PC-9 (cell line): ENCODE measurements at regions of chr17 and their contacts with region 1.

Region 1: GRCh38 chr17:79065105-79065670 is 9.4 kb upstream of the ENGASE start:
- DNase-seq: no peak
- H3K4me3 ChIP-seq: no peak overlapping the region
- H3K27ac ChIP-seq: no peak overlapping the region
- H3K4me1 ChIP-seq: no peaks in the 10 kb centered on the region
- H3K27me3 ChIP-seq: no peaks in the 10 kb centered on the region
- CTCF ChIP-seq: peak; percentile 58

Region 2: GRCh38 chr17:77881545-77881944 is 1183.6 kb before region 1 on chr17:
- CTCF ChIA-PET with region 1: no interaction called
- POLR2A ChIA-PET with region 1: no interaction called
- intact Hi-C with region 1: no loop called
- DNase-seq: no peak
- H3K4me3 ChIP-seq: no peak overlapping the region
- H3K27ac ChIP-seq: no peak overlapping the region
- H3K4me1 ChIP-seq: no peaks in the 10 kb centered on the region
- H3K27me3 ChIP-seq: peaks cover 49% of the 10 kb centered on the region
- CTCF ChIP-seq: no peak

Region 3: GRCh38 chr17:78532922-78533640 is 532.1 kb before region 1 on chr17:
- CTCF ChIA-PET with region 1: no interaction called
- POLR2A ChIA-PET with region 1: no interaction called
- intact Hi-C with region 1: no loop called
- DNase-seq: peak; percentile 40 to 80
- H3K4me3 ChIP-seq: no peak overlapping the region
- H3K27ac ChIP-seq: peak overlapping the region; percentile 27; the same call in 1 of the 2 replicates
- H3K4me1 ChIP-seq: peaks cover 43% of the 10 kb centered on the region
- H3K27me3 ChIP-seq: no peaks in the 10 kb centered on the region
- CTCF ChIP-seq: no peak

Region 4: GRCh38 chr17:78999056-78999768 is 66.0 kb before region 1 on chr17:
- CTCF ChIA-PET with region 1: interaction called, 11 read pairs
- POLR2A ChIA-PET with region 1: no interaction called
- intact Hi-C with region 1: no loop called
- DNase-seq: no peak
- H3K4me3 ChIP-seq: no peak overlapping the region
- H3K27ac ChIP-seq: no peak overlapping the region
- H3K4me1 ChIP-seq: peaks cover 34% of the 10 kb centered on the region
- H3K27me3 ChIP-seq: no peaks in the 10 kb centered on the region
- CTCF ChIP-seq: no peak

Region 5: GRCh38 chr17:79126139-79126538 is 61.0 kb after region 1 on chr17:
- CTCF ChIA-PET with region 1: no interaction called
- POLR2A ChIA-PET with region 1: no interaction called
- intact Hi-C with region 1: no loop called
- DNase-seq: peak in 1 of 2 experiments; percentile 27
- H3K4me3 ChIP-seq: no peak overlapping the region
- H3K27ac ChIP-seq: no peak overlapping the region
- H3K4me1 ChIP-seq: no peaks in the 10 kb centered on the region
- H3K27me3 ChIP-seq: peaks cover 95% of the 10 kb centered on the region
- CTCF ChIP-seq: no peak; the same call in 1 of the 2 replicates